CD8-positive, alpha-beta T cell (primary cell): ENCODE measurements at regions of chr4 and their contacts with region 1.

Region 1: DNA sequence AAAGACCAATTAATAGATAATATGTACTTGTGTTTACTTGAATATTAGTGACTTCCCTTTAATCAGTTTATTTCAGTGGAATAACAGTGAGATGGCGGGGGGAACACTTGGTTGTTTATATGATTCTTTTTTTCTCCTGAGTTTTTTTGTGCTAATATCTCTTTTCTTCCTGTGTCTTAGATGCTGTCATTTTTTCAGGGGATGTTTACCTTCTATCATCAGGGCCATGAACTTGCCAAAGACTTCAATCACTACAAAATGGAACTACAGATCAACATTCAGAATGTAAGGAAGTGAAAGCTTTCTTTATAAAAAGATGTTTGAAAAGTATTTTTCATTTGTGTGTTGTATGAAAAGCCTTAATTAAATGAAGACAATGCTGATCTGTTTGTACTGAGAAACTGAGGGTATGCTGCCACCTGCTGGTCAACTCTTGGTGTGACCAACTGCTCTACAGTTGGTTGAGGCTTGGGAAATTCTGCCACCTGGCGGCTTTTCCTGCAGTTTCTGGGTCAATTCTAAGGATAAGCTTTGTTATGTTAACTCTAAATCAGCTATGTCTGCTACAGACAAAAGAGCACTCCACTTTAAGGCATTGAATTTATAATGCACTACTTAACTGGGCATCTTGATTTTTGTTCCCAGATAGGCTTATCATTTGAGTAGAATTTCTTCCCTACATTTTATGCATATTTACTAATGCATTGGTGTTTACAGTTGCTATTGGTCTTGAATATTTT is 134.8 kb downstream of the ARHGAP10 start:
- DNase-seq: peak; percentile 85 to 97 (median 92)
- ATAC-seq: peak; percentile 99
- H3K4me3 ChIP-seq: no peak overlapping the region
- H3K4me3 Mint-ChIP-seq: no peak overlapping the region
- H3K27ac ChIP-seq: no peak overlapping the region
- H3K27ac Mint-ChIP-seq: no peak overlapping the region
- H3K4me1 ChIP-seq: no peaks in the 10 kb centered on the region
- H3K4me1 Mint-ChIP-seq: no peaks in the 10 kb centered on the region
- H3K27me3 ChIP-seq: no peaks in the 10 kb centered on the region
- H3K27me3 Mint-ChIP-seq: no peaks in the 10 kb centered on the region
- CTCF ChIP-seq: peak; percentile 99

Region 2: GRCh38 chr4:147019061-147019460 is 847.6 kb before region 1 on chr4:
- CTCF ChIA-PET with region 1: no interaction called
- POLR2A ChIA-PET with region 1: no interaction called
- intact Hi-C with region 1: loop called in 1 of 2 experiments (anchors 2 kb)
- DNase-seq: peak; percentile 5 to 60 (median 39)
- ATAC-seq: no peak
- H3K4me3 ChIP-seq: no peak overlapping the region
- H3K4me3 Mint-ChIP-seq: no peak overlapping the region
- H3K27ac ChIP-seq: no peak overlapping the region
- H3K27ac Mint-ChIP-seq: no peak overlapping the region
- H3K4me1 ChIP-seq: no peaks in the 10 kb centered on the region
- H3K4me1 Mint-ChIP-seq: no peaks in the 10 kb centered on the region
- H3K27me3 ChIP-seq: no peaks in the 10 kb centered on the region
- H3K27me3 Mint-ChIP-seq: peaks cover 3% of the 10 kb centered on the region
- CTCF ChIP-seq: peak; percentile 41

Region 3: DNA sequence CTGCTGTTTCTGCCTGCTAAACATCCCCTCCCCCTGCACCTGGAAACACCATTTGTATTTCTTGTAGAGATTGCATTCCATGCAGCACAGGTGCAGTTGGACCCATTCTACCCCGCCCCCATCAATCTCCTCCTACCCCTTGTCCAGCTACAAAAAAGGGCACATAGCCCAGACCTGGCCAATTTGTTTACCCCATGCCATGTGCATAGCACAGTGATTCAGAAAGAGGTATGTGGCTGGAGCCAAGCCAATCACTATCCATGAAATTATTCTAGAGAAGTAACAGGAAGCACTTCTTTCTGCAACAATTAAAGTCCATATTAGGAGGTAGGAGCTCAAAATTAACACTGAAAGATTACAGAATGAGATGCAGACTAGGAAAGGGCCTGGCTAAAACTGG is 269.7 kb before region 1 on chr4:
- CTCF ChIA-PET with region 1: interaction called, 20 read pairs
- POLR2A ChIA-PET with region 1: no interaction called
- intact Hi-C with region 1: loop called (anchors 2 to 5 kb)
- DNase-seq: no peak
- ATAC-seq: no peak
- H3K4me3 ChIP-seq: no peak overlapping the region
- H3K4me3 Mint-ChIP-seq: no peak overlapping the region
- H3K27ac ChIP-seq: no peak overlapping the region
- H3K27ac Mint-ChIP-seq: no peak overlapping the region
- H3K4me1 ChIP-seq: no peaks in the 10 kb centered on the region
- H3K4me1 Mint-ChIP-seq: peaks cover 2% of the 10 kb centered on the region
- H3K27me3 ChIP-seq: no peaks in the 10 kb centered on the region
- H3K27me3 Mint-ChIP-seq: peaks cover 5% of the 10 kb centered on the region
- CTCF ChIP-seq: no peak

Region 4: DNA sequence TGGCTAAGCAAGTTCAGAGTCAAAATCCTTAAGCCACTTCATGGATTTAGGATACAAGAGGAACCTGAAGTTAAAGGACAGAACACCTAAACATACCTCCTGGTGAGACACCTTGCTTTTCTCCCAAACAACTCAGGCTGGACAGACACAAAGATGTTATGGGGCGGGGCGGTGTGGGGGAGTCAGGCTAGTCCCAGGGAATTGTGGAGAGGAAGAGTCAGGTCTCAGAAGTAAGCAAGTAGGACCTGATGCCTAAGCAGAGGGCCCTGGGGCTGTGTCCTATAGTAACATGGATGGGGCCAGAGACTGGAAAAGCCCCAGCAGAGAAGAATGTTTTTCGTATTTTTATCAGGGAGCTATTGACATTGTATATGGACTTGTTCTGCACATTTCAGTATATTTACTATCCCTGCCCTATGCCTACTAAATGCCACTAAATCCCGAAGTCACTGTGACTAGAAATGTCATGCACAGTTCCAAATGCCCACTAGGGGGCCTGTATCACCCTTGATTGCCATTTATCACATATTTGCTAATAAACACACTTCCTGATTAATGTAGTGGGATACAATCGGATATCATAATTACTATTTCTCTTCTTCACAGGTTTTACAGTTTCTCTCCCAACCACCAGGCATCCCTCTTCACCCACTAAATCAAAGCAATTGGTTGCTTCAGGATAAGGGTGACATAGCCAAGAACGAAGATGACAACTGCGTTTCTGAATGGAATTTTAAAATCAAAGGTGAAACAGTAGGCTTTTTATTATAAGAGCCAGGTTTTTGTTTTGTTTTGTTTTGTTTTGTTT is 158.6 kb before region 1 on chr4:
- CTCF ChIA-PET with region 1: interaction called, 137 read pairs
- POLR2A ChIA-PET with region 1: interaction called, 6 read pairs
- intact Hi-C with region 1: loop called (anchors 1 kb)
- DNase-seq: peak in 7 of 9 experiments; percentile 18 to 75 (median 60)
- ATAC-seq: peak; percentile 69
- H3K4me3 ChIP-seq: no peak overlapping the region
- H3K4me3 Mint-ChIP-seq: no peak overlapping the region
- H3K27ac ChIP-seq: no peak overlapping the region
- H3K27ac Mint-ChIP-seq: no peak overlapping the region
- H3K4me1 ChIP-seq: no peaks in the 10 kb centered on the region
- H3K4me1 Mint-ChIP-seq: peaks cover 2% of the 10 kb centered on the region
- H3K27me3 ChIP-seq: no peaks in the 10 kb centered on the region
- H3K27me3 Mint-ChIP-seq: no peaks in the 10 kb centered on the region
- CTCF ChIP-seq: peak; percentile 93

Region 5: DNA sequence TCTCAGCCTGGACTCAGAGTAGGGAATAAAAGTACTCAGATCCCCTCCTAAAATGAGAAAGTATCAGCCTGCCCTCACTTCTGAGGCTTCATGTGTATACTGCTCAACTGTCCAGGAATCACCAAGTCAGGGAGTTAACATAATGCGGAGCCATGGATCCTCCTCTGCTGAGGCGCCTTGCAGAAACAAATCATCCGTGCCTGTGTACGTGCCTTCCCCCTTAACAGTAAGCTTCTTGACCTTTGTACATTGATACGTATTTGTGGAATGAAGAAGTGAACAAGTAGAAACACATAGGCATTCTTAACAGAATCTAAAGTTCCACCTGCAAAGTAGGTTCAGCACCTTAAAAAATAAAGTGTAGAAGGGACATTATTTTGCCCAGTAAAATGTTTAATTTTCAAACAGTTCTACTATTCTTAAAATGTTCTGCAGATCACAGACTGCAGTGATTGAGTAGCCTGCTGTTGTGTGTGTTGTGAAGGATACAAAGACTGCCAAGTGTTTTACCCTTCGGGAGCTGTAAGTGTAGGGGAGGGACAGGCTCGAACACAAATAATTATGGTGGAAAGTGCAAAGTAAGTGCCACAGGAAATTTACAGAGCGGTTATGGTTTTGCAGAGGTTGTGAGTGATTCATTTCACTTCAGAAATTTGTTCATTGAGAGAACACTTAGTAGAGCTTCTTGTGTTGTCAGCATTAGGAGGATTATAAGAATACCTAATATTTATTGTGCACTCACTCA is 73.0 kb before region 1 on chr4:
- CTCF ChIA-PET with region 1: interaction called, 14 read pairs
- POLR2A ChIA-PET with region 1: interaction called, 4 read pairs
- intact Hi-C with region 1: loop called in 1 of 2 experiments (anchors 2 kb)
- DNase-seq: peak in 2 of 9 experiments; percentile 18 to 35
- ATAC-seq: no peak
- H3K4me3 ChIP-seq: no peak overlapping the region
- H3K4me3 Mint-ChIP-seq: peak overlapping the region; percentile 88
- H3K27ac ChIP-seq: no peak overlapping the region
- H3K27ac Mint-ChIP-seq: peak overlapping the region; percentile 3
- H3K4me1 ChIP-seq: peaks cover 19% of the 10 kb centered on the region
- H3K4me1 Mint-ChIP-seq: peaks cover 37% of the 10 kb centered on the region
- H3K27me3 ChIP-seq: no peaks in the 10 kb centered on the region
- H3K27me3 Mint-ChIP-seq: no peaks in the 10 kb centered on the region
- CTCF ChIP-seq: no peak

Region 6: GRCh38 chr4:147831551-147832177 is 35.0 kb before region 1 on chr4:
- CTCF ChIA-PET with region 1: interaction called, 32 read pairs
- POLR2A ChIA-PET with region 1: no interaction called
- intact Hi-C with region 1: no loop called
- DNase-seq: peak in 1 of 9 experiments; percentile 33
- ATAC-seq: no peak
- H3K4me3 ChIP-seq: no peak overlapping the region
- H3K4me3 Mint-ChIP-seq: no peak overlapping the region
- H3K27ac ChIP-seq: no peak overlapping the region
- H3K27ac Mint-ChIP-seq: no peak overlapping the region
- H3K4me1 ChIP-seq: no peaks in the 10 kb centered on the region
- H3K4me1 Mint-ChIP-seq: no peaks in the 10 kb centered on the region
- H3K27me3 ChIP-seq: no peaks in the 10 kb centered on the region
- H3K27me3 Mint-ChIP-seq: no peaks in the 10 kb centered on the region
- CTCF ChIP-seq: no peak

Region 7: DNA sequence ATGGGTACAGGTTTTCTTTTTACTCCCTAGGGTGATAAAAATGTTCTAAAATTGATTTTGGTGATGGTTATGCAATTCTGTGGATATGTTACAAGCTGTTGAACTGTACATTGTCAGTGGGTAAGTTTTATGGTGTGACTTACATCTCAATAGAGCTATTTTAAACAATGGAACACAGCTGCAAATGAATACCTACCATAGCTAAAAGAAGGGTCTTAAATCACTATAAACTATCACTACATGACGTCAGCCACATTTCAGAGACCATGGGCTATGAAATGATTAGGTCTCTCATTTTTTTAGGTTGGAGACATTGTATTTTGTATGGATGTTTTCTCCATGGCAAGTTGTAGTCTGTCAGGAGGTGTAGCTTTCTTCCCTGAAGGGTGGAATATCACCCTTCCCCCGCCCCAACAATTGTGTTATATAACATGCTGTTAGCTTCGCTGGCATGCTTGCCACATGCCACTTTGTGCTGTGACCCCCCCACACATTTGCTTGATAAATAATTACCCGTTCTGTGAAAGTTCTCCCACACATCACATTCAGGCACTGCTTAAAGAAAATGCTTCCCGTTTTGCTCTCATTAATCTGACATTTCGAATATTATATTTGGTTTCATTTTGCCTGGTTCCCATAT is 24.9 kb after region 1 on chr4:
- CTCF ChIA-PET with region 1: interaction called, 10 read pairs
- POLR2A ChIA-PET with region 1: no interaction called
- intact Hi-C with region 1: no loop called
- DNase-seq: no peak
- ATAC-seq: no peak
- H3K4me3 ChIP-seq: no peak overlapping the region
- H3K4me3 Mint-ChIP-seq: no peak overlapping the region
- H3K27ac ChIP-seq: no peak overlapping the region
- H3K27ac Mint-ChIP-seq: no peak overlapping the region
- H3K4me1 ChIP-seq: no peaks in the 10 kb centered on the region
- H3K4me1 Mint-ChIP-seq: no peaks in the 10 kb centered on the region
- H3K27me3 ChIP-seq: no peaks in the 10 kb centered on the region
- H3K27me3 Mint-ChIP-seq: no peaks in the 10 kb centered on the region
- CTCF ChIP-seq: no peak